Colonic mucosa (tissue), 4 donors: ENCODE measurements at regions of chr2 and their contacts with region 1.

Region 1: DNA sequence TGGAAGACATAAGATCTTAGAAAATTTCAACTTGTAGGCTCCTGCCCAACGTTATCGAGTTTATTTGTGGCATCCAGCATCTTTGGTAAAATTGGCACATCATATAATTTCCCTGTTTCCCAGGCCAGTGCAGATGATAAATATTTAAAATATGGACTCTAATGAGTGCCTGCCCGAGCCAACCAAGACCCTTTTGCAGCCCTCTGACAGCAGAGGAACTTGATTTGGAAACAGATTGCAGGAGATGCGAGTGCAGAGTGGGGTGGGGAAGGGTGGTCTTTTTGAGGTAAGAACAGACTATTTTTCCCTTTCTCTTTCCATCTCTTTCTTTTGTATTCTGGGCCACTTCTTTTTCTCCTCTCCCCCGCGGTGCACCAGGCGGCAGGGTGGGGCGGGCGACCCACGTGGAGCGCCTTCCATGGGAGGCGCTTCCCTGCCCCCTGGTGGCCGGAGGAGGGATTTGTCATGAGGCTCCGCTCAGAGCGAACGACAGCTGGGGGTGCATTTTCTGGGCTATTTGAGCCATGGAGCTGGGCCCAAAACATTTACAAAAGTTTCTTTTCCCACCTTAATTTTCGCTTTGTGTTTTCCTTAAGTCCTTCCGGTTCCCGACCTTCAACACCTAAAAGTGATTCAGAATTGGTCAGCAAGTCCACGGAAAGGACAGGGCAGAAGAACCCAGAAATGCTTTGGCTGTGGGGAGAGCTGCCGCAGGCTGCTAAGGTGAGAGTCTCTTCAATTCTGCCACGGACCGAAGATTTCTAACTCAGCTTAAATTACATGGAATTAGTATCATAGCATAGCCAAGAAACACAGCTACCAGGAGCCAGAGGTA is 32.7 kb downstream of the LPIN1 start:
- DNase-seq: peak; percentile 83
- H3K4me3 ChIP-seq: no peak overlapping the region
- H3K27ac ChIP-seq: no peak overlapping the region
- H3K4me1 ChIP-seq: no peaks in the 10 kb centered on the region
- H3K27me3 ChIP-seq: no peaks in the 10 kb centered on the region
- CTCF ChIP-seq: peak; percentile 96

Region 2: GRCh38 chr2:11692966-11693521 is 86.1 kb before region 1 on chr2:
- intact Hi-C with region 1: loop called (anchors 1 kb)
- DNase-seq: peak; percentile 85
- H3K4me3 ChIP-seq: no peak overlapping the region
- H3K27ac ChIP-seq: no peak overlapping the region
- H3K4me1 ChIP-seq: peaks cover 2% of the 10 kb centered on the region
- H3K27me3 ChIP-seq: no peaks in the 10 kb centered on the region
- CTCF ChIP-seq: peak; percentile 72

Region 3: DNA sequence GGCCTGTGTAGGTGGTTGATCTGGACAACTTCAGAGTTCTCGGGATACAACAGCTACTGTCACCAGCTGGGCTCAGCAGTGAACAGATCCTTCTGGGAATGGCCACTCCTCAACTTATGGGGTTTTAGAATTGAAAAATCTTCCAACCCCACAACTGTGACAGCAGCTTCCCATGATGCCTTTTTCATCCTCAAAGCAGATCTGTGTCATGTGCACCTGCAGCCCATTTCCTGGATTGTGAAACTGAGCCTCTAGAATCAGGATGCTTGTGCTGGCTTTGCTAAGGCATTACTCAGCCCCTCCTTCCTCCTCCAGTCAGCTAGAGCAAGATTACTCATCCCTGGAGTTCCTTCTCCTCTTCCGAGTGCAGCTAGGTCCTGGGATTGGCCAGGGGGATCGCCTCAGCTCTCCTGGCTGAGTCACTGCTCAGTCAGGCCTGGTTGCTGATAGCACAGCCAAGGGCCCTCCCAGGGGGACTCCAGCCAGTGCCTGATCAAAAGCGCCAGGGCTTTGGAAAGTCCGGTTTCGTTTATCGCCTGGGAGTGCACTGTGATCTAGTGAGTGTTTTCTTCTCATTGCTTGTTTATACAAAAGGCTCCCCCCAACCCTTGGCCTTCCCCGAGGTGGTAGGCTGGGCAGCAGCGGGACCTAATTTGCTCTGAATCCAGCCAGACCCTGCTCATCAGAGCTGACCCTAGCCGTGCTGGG is 35.1 kb before region 1 on chr2:
- intact Hi-C with region 1: loop called (anchors 5 kb)
- DNase-seq: peak; percentile 96
- H3K4me3 ChIP-seq: no peak overlapping the region
- H3K27ac ChIP-seq: peak overlapping the region; percentile 64
- H3K4me1 ChIP-seq: peaks cover 16% of the 10 kb centered on the region
- H3K27me3 ChIP-seq: no peaks in the 10 kb centered on the region
- CTCF ChIP-seq: no peak